ENCODE measurements at regions of chr9 and their contacts with region 1.

Region 1: DNA sequence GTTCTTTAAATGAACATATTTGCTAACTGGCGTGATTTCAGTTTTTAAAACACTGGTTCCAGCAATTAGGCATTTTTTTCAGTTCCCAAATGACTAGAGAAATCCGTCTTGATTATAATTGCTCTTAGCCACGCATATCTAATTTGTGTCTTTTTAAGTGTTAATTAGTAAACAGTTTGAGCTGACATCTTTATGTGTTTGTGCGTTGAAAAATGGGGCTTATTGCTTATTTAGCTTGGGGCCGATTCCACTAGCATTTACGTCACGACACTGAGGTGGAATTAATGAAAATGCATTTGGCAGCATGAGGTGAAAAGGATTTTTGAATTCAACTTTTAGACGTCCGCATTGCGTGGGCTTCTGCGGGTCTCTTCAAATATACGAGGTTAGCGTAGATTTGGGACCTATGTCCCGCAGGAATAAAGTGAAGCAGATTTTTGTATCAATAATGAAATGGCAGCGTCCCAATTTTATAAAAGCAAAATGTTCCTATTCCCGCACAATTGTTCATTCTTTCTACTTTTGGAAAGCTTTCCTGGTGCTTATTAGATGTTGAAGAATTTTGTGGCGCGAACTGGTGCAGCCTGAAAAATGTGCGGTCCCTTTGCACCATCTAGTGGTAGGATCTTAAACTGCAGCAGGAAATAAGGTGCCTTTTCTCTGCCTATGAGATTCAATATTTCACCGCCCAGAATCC is 122.7 kb upstream of the LMX1B start:
- DNase-seq: no peak
- H3K4me3 ChIP-seq: no peak overlapping the region
- H3K27ac ChIP-seq: no peak overlapping the region
- H3K4me1 ChIP-seq: peaks cover 0 to 4% (median 0%) of the 10 kb centered on the region in 3 donors
- H3K27me3 ChIP-seq: no peaks in the 10 kb centered on the region
- CTCF ChIP-seq: peak; percentile 79 to 98 (median 96)
- POLR2A ChIP-seq: no peak

Region 2: GRCh38 chr9:125407974-125408900 is 1082.8 kb before region 1 on chr9:
- intact Hi-C with region 1: loop called (anchors 10 kb)
- DNase-seq: no peak
- H3K4me3 ChIP-seq: peak overlapping the region; percentile 44 to 86 (median 58)
- H3K27ac ChIP-seq: peak overlapping the region; percentile 23 to 73 (median 50)
- H3K4me1 ChIP-seq: peaks cover 0 to 19% (median 4%) of the 10 kb centered on the region in 3 donors
- H3K27me3 ChIP-seq: peaks cover 0 to 23% (median 3%) of the 10 kb centered on the region in 4 donors
- CTCF ChIP-seq: peak; percentile 47 to 91 (median 72)
- POLR2A ChIP-seq: no peak

Region 3: GRCh38 chr9:126301985-126302603 is 188.9 kb before region 1 on chr9:
- intact Hi-C with region 1: loop called (anchors 10 kb)
- DNase-seq: no peak
- H3K4me3 ChIP-seq: no peak overlapping the region
- H3K27ac ChIP-seq: no peak overlapping the region
- H3K4me1 ChIP-seq: no peaks in the 10 kb centered on the region
- H3K27me3 ChIP-seq: peaks cover 0 to 9% (median 0%) of the 10 kb centered on the region in 4 donors
- CTCF ChIP-seq: peak; percentile 60 to 87 (median 70)
- POLR2A ChIP-seq: no peak

Region 4: DNA sequence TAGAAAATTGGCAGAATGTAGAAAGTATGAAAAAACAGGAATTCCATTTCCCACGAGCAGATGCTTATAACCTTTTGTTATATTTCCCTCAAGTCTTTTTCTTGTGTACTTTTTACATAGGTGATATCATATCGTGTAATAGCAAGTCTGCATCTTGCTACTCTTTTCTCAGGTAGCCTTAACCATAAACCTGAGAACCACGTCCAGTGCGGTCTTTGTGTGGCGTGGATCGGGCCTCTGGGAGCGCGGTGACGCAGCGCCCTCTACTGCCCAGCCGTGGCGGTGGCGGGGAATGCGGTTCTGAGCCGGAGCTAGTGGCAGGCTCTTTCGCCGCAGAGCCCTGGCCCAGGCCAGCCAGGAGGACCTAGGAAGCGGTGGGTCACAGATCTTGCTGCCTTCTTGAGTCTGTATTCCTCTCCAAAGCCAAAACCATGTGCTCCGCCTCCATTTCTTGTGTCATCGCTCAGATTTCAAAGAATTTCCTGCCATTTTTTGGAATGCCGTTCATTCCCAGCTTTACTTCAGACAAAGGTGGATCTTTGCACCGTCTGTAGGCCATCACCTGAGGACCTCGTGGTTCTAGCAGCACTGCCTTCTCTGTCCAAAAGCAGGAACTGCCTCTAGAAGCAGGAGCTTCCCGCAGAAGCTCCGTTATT is 92.5 kb before region 1 on chr9:
- intact Hi-C with region 1: loop called (anchors 10 kb)
- DNase-seq: no peak
- H3K4me3 ChIP-seq: no peak overlapping the region
- H3K27ac ChIP-seq: peak overlapping the region in 1 of 4 donors; percentile 35
- H3K4me1 ChIP-seq: peaks cover 14 to 52% (median 20%) of the 10 kb centered on the region in 3 donors
- H3K27me3 ChIP-seq: no peaks in the 10 kb centered on the region
- CTCF ChIP-seq: peak; percentile 89 to 97 (median 96)
- POLR2A ChIP-seq: no peak